Heart left ventricle (tissue), 16 donors: ENCODE measurements at regions of chr4 and their contacts with region 1.

Region 1: GRCh38 chr4:121192480-121192879 is 28.4 kb upstream of the TNIP3 start:
- DNase-seq: no peak
- ATAC-seq: no peak
- H3K4me3 ChIP-seq: peak overlapping the region in 3 of 12 donors; percentile 11 to 17 (median 15)
- H3K27ac ChIP-seq: no peak overlapping the region
- H3K4me1 ChIP-seq: peaks cover 0 to 20% (median 0%) of the 10 kb centered on the region in 12 donors
- H3K27me3 ChIP-seq: peaks cover 0 to 5% (median 0%) of the 10 kb centered on the region in 9 donors
- CTCF ChIP-seq: peak; percentile 54 to 81 (median 72)
- POLR2A ChIP-seq: no peak

Region 2: DNA sequence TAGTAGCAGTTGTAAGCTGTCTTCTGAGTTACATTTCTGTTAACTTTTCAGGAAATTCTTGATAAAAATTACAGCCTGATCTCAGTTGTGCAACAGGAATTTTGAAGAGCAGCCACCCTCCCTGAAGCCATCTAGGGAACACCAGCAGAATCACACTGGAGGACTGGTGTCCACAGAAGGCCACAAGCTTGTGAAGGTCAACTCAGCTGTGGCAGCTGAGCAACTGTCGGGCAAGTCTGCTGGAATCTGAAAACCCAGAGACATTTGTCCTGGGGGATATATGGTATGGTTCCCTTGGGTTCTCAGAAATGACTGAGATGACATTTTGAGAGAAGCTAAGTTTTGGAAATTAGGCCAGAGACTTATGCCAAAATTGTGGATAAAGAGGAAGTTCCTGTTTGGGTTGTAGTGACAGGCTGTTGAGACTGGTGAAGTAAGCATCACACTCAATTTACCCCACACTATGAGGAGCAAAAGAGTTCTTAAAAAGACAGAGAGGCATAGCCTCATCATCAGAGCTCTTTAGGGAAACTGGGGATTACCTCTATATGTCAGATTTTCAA is 49.8 kb after region 1 on chr4:
- intact Hi-C with region 1: no loop called
- DNase-seq: no peak
- ATAC-seq: no peak
- H3K4me3 ChIP-seq: no peak overlapping the region
- H3K27ac ChIP-seq: no peak overlapping the region
- H3K4me1 ChIP-seq: no peaks in the 10 kb centered on the region
- H3K27me3 ChIP-seq: no peaks in the 10 kb centered on the region
- CTCF ChIP-seq: no peak
- POLR2A ChIP-seq: no peak

Region 3: GRCh38 chr4:121252224-121252806 is 59.8 kb after region 1 on chr4:
- intact Hi-C with region 1: loop called (anchors 1 to 5 kb)
- DNase-seq: peak in 4 of 5 donors; percentile 32 to 71 (median 44)
- ATAC-seq: peak in 3 of 4 donors; percentile 62 to 79 (median 78)
- H3K4me3 ChIP-seq: no peak overlapping the region
- H3K27ac ChIP-seq: no peak overlapping the region
- H3K4me1 ChIP-seq: peaks cover 0 to 15% (median 0%) of the 10 kb centered on the region in 12 donors
- H3K27me3 ChIP-seq: no peaks in the 10 kb centered on the region
- CTCF ChIP-seq: peak; percentile 63 to 85 (median 80)
- POLR2A ChIP-seq: no peak

Region 4: GRCh38 chr4:121421594-121421993 is 229.1 kb after region 1 on chr4:
- intact Hi-C with region 1: loop called in 2 of 10 experiments (anchors 5 kb)
- DNase-seq: no peak
- ATAC-seq: no peak
- H3K4me3 ChIP-seq: peak overlapping the region in 9 of 12 donors; percentile 20 to 46 (median 33)
- H3K27ac ChIP-seq: peak overlapping the region in 1 of 12 donors; percentile 40
- H3K4me1 ChIP-seq: no peaks in the 10 kb centered on the region
- H3K27me3 ChIP-seq: no peaks in the 10 kb centered on the region
- CTCF ChIP-seq: peak in 11 of 12 donors; percentile 31 to 59 (median 51)
- POLR2A ChIP-seq: no peak

Region 5: GRCh38 chr4:121656269-121656641 is 463.8 kb after region 1 on chr4:
- intact Hi-C with region 1: loop called in 3 of 10 experiments (anchors 10 kb)
- DNase-seq: peak in 4 of 5 donors; percentile 33 to 50 (median 40)
- ATAC-seq: peak; percentile 76 to 91 (median 80)
- H3K4me3 ChIP-seq: no peak overlapping the region
- H3K27ac ChIP-seq: peak overlapping the region in 1 of 12 donors; percentile 43
- H3K4me1 ChIP-seq: peaks cover 0 to 11% (median 0%) of the 10 kb centered on the region in 12 donors
- H3K27me3 ChIP-seq: no peaks in the 10 kb centered on the region
- CTCF ChIP-seq: peak in 10 of 12 donors; percentile 10 to 54 (median 38)
- POLR2A ChIP-seq: no peak

Region 6: GRCh38 chr4:121736735-121737351 is 544.4 kb after region 1 on chr4:
- intact Hi-C with region 1: loop called in 1 of 10 experiments (anchors 10 kb)
- DNase-seq: peak in 1 of 5 donors; percentile 18
- ATAC-seq: peak in 1 of 4 donors; percentile 28
- H3K4me3 ChIP-seq: no peak overlapping the region
- H3K27ac ChIP-seq: no peak overlapping the region
- H3K4me1 ChIP-seq: peaks cover 0 to 22% (median 0%) of the 10 kb centered on the region in 12 donors
- H3K27me3 ChIP-seq: peaks cover 0 to 3% (median 0%) of the 10 kb centered on the region in 9 donors
- CTCF ChIP-seq: peak in 11 of 12 donors; percentile 14 to 61 (median 44)
- POLR2A ChIP-seq: no peak